A549 (cell line): ENCODE measurements at regions of chr10 and their contacts with region 1.

Region 1: GRCh38 chr10:60646966-60647796 is 131.1 kb upstream of the CDK1 start:
- DNase-seq: peak; percentile 16 to 64
- ATAC-seq: peak in 1 of 2 experiments; percentile 79; a peak in 4 of 6 replicates
- H3K4me3 ChIP-seq: no peak overlapping the region
- H3K27ac ChIP-seq: no peak overlapping the region
- H3K4me1 ChIP-seq: peaks cover 30% of the 10 kb centered on the region; the same call in 2 of the 3 replicates
- CTCF ChIP-seq: peak; percentile 88
- EP300 ChIP-seq: no peak
- POLR2A ChIP-seq: no peak
- RAD21 ChIP-seq: peak; percentile 88 to 93

Region 2: DNA sequence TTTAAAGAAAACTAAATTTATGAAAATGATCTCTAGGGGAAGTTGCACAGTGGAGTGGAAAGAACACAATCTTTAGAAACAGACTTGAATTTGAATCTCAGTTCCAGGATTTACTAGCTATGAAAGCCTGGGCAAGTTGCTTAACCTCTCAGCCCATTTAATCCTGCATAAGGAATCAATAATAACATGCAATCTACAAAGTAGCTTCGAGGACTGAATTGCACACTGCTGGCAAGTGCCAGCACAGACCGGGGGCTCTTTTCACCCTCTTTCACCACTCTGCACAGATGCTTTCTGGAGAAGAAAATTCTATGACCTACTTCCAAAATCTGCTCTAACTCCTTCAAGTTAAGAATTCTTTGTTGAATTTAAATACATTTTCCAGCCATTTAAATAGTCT is 194.1 kb before region 1 on chr10:
- CTCF ChIA-PET with region 1: interaction called, 201 read pairs
- POLR2A ChIA-PET with region 1: no interaction called
- DNase-seq: no peak
- ATAC-seq: no peak
- H3K4me3 ChIP-seq: no peak overlapping the region
- H3K27ac ChIP-seq: no peak overlapping the region
- H3K4me1 ChIP-seq: no peaks in the 10 kb centered on the region
- CTCF ChIP-seq: no peak
- EP300 ChIP-seq: no peak
- POLR2A ChIP-seq: no peak
- RAD21 ChIP-seq: no peak

Region 3: DNA sequence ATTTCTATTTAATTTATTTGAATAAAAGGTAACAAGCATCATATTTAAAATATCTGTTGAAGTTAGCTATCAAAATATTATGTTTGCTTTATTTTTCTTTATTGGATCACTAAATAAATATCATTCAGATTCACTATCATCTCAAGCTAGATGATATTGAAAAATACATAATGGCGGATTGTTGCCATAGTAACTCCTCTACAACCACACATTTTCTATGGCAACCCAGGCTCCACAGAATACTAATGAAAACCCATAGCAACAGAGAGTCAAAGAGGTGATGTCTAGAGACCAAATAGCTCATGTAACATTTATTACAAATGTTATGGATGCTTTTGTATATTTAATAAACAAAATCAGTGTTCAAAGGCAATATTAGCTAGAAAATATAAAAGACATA is 17.8 kb before region 1 on chr10:
- CTCF ChIA-PET with region 1: interaction called, 29 read pairs
- POLR2A ChIA-PET with region 1: no interaction called
- DNase-seq: no peak
- ATAC-seq: no peak
- H3K4me3 ChIP-seq: no peak overlapping the region
- H3K27ac ChIP-seq: no peak overlapping the region
- H3K4me1 ChIP-seq: no peaks in the 10 kb centered on the region
- CTCF ChIP-seq: no peak
- EP300 ChIP-seq: no peak
- POLR2A ChIP-seq: no peak
- RAD21 ChIP-seq: no peak